Transverse colon (tissue), 4 donors: ENCODE measurements at regions of chr17 and their contacts with region 1.

Region 1: GRCh38 chr17:80511222-80512180 is 33.1 kb upstream of the RPTOR start:
- DNase-seq: no peak
- H3K4me3 ChIP-seq: no peak overlapping the region
- H3K27ac ChIP-seq: no peak overlapping the region
- H3K4me1 ChIP-seq: no peaks in the 10 kb centered on the region
- H3K27me3 ChIP-seq: peaks cover 5% of the 10 kb centered on the region
- CTCF ChIP-seq: no peak
- EP300 ChIP-seq: no peak
- POLR2A ChIP-seq: no peak

Region 2: DNA sequence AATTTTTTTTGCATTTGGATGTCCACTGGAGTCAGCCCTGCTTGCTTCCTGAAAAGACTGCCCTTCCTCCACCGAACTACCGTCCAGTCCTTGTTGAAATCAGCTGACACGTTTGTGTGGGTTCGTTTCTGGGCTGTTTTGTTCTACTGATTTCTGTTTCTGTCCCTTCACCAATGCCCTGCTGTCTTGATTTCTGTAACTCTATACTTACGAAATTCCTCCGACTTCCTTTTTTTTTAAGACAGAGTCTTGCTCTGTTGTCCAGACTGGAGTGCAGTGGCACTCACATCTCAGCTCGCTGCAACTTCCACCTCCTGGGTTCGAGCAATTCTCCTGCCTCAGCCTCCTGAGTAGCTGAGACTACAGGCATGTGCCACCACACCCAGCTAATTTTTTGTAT is 418.5 kb before region 1 on chr17:
- in situ Hi-C with region 1: no loop called
- intact Hi-C with region 1: no loop called
- DNase-seq: no peak
- H3K4me3 ChIP-seq: no peak overlapping the region
- H3K27ac ChIP-seq: peak overlapping the region in 2 of 4 donors; percentile 25 to 40
- H3K4me1 ChIP-seq: no peaks in the 10 kb centered on the region
- H3K27me3 ChIP-seq: no peaks in the 10 kb centered on the region
- CTCF ChIP-seq: no peak
- EP300 ChIP-seq: no peak
- POLR2A ChIP-seq: no peak

Region 3: DNA sequence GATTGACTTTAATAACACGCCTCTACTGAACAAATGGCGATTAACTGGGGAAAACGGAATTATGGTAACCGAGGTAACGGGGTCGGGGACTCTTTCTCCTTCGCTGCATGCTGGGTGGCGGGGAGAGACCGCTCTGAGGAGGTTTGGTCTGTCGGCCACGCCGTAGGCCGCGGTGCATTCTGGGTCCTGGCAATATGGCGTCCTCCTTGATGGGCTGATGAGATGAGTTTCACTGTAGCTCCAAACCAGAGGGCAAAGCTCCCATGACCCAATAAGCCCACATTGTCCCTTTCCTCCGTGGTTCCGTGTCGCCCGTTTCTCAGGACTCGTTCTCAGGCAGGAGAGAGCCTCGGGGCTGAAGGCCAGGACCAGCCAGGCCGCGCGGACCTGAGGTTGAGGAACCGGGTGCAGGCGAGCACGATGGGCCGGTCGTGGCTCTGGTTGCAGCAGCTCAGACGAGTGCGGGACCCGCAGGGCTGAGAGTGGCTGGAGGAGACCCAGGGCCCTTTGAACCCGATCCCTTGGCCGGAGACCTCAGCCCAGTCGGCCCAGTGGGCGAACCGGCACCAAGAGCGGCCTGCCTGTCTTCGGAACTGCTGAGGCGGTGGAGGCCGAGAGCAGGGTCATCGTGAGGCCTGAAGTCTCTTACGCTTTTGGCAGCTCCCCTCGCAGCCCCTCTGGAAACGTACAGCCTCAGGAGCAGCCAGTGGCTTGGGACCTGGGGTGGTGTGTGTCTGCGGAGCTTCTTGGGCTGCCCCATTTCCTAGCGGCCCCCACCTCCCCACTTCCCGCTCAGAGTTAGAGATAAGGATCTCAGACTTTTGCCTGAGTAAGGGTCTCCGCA is 33.4 kb after region 1 on chr17 and contains the start of gene RPTOR:
- in situ Hi-C with region 1: no loop called
- intact Hi-C with region 1: loop called (anchors 2 kb)
- DNase-seq: peak; percentile 94
- H3K4me3 ChIP-seq: peak within 1 kb of the TSS; percentile 69 to 96 (median 90)
- H3K27ac ChIP-seq: peak within 1 kb of the TSS; percentile 75 to 91 (median 85)
- H3K4me1 ChIP-seq: peaks cover 12 to 36% (median 15%) of the 10 kb centered on the region in 4 donors
- H3K27me3 ChIP-seq: peaks cover 20% of the 10 kb centered on the region
- CTCF ChIP-seq: no peak
- EP300 ChIP-seq: no peak
- POLR2A ChIP-seq: peak; percentile 35
- total RNA-seq, gene RPTOR: 28.9 to 79.3 (median 48.0) TPM

Region 4: GRCh38 chr17:80586846-80587228 is 75.3 kb after region 1 on chr17:
- in situ Hi-C with region 1: no loop called
- intact Hi-C with region 1: no loop called
- DNase-seq: no peak
- H3K4me3 ChIP-seq: no peak overlapping the region
- H3K27ac ChIP-seq: no peak overlapping the region
- H3K4me1 ChIP-seq: no peaks in the 10 kb centered on the region
- H3K27me3 ChIP-seq: no peaks in the 10 kb centered on the region
- CTCF ChIP-seq: no peak
- EP300 ChIP-seq: no peak
- POLR2A ChIP-seq: no peak

Region 5: GRCh38 chr17:80605326-80606066 is 94.0 kb after region 1 on chr17:
- in situ Hi-C with region 1: no loop called
- intact Hi-C with region 1: no loop called
- DNase-seq: no peak
- H3K4me3 ChIP-seq: no peak overlapping the region
- H3K27ac ChIP-seq: no peak overlapping the region
- H3K4me1 ChIP-seq: peaks cover 0 to 21% (median 13%) of the 10 kb centered on the region in 4 donors
- H3K27me3 ChIP-seq: no peaks in the 10 kb centered on the region
- CTCF ChIP-seq: no peak
- EP300 ChIP-seq: no peak
- POLR2A ChIP-seq: no peak